Heart right ventricle (tissue), 16 donors: ENCODE measurements at regions of chr4 and their contacts with region 1.

Region 1: GRCh38 chr4:121243485-121243884 is 79.4 kb upstream of the TNIP3 start:
- DNase-seq: no peak
- ATAC-seq: no peak
- H3K4me3 ChIP-seq: peak overlapping the region in 1 of 10 donors; percentile 26
- H3K27ac ChIP-seq: no peak overlapping the region
- H3K4me1 ChIP-seq: no peaks in the 10 kb centered on the region
- H3K27me3 ChIP-seq: no peaks in the 10 kb centered on the region
- CTCF ChIP-seq: no peak

Region 2: DNA sequence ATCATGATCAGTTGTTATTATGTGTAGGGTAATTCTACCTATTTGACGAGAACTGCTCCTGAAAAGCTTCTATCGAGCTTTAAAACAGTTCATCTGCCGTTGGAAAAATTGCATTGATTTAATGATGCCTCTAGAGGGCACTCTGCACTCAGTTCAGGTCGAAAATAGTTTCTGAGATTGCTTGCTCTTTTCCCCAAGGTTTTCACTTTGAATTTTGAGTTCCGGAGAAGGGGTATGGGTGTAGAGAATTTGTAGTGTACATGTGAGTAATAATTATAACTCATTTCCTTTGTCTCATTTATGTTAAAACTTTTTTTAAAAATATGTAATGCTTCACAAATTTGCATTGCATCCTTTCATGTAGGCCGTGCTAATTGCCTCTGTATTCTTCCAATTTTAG is 51.0 kb before region 1 on chr4:
- intact Hi-C with region 1: loop called in 1 of 10 experiments (anchors 10 kb)
- DNase-seq: no peak
- ATAC-seq: no peak
- H3K4me3 ChIP-seq: peak overlapping the region in 1 of 10 donors; percentile 1
- H3K27ac ChIP-seq: no peak overlapping the region
- H3K4me1 ChIP-seq: peaks cover 0 to 8% (median 0%) of the 10 kb centered on the region in 9 donors
- H3K27me3 ChIP-seq: peaks cover 0 to 12% (median 0%) of the 10 kb centered on the region in 7 donors
- CTCF ChIP-seq: peak; percentile 32 to 82 (median 75)

Region 3: DNA sequence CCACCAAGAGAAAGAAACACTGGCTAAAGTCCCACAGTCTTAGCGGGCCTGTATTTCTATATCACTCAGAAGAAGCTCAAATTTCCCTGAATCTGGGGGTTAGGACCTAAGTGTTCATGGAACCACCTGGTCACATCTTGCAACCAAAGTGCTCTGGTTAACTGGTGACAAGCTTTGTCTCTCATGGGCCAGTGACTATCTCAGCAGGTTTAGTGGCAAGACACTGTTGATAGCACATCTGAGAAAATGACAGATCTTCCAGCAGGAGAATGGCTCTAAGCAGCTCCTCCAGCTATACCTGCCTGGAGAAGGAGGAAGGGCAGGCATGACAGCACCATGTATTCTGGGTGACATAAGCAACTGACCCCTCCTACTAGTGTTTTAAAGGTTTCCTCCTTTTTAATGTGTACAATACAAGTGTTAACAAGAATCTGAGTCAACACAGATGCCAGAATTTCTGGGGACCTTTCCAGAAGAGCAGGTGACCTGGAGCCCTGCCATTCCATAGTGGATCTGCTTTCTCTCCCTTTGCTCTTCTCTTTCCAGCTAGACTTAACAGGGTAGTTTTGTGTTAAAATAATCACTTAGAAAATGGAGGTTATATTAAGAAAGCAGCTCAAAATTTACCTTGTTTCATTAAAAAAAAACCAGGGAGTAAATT is 154.6 kb after region 1 on chr4:
- intact Hi-C with region 1: no loop called
- DNase-seq: peak in 1 of 2 donors; percentile 44
- ATAC-seq: peak; percentile 58 to 92 (median 80)
- H3K4me3 ChIP-seq: no peak overlapping the region
- H3K27ac ChIP-seq: peak overlapping the region in 7 of 10 donors; percentile 20 to 74 (median 57)
- H3K4me1 ChIP-seq: peaks cover 0 to 24% (median 5%) of the 10 kb centered on the region in 9 donors
- H3K27me3 ChIP-seq: no peaks in the 10 kb centered on the region
- CTCF ChIP-seq: no peak

Region 4: GRCh38 chr4:121958777-121959176 is 715.3 kb after region 1 on chr4:
- intact Hi-C with region 1: no loop called
- DNase-seq: no peak
- ATAC-seq: no peak
- H3K4me3 ChIP-seq: no peak overlapping the region
- H3K27ac ChIP-seq: no peak overlapping the region
- H3K4me1 ChIP-seq: no peaks in the 10 kb centered on the region
- H3K27me3 ChIP-seq: peaks cover 0 to 22% (median 9%) of the 10 kb centered on the region in 7 donors
- CTCF ChIP-seq: no peak